ENCODE measurements at regions of chr5 and their contacts with region 1.

Region 1: GRCh38 chr5:149434162-149435014 is 55.3 kb upstream of the IL17B start:
- DNase-seq: no peak
- H3K4me3 ChIP-seq: no peak overlapping the region
- CTCF ChIP-seq: peak; percentile 86

Region 2: GRCh38 chr5:148559461-148559860 is 874.9 kb before region 1 on chr5:
- CTCF ChIA-PET with region 1: no interaction called
- POLR2A ChIA-PET with region 1: no interaction called
- DNase-seq: no peak
- H3K4me3 ChIP-seq: no peak overlapping the region
- CTCF ChIP-seq: no peak

Region 3: DNA sequence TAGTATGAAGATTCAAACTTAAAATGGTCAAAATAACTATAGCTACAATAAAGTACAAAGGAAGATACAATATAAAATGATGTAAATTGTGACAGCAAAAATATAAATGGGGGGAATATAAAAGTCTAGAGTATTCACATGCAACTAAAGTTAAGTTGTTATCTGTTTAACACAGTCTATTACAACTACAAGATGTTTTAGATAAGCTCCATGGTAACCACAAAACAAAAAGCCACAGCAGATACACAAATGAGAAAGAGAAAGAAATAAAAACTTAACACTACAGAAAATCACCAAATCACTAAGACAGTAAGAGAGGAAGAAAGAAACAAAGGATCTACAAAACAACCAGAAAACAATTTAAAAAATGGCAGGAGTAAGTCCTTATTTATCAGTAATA is 354.5 kb before region 1 on chr5:
- CTCF ChIA-PET with region 1: no interaction called
- POLR2A ChIA-PET with region 1: no interaction called
- DNase-seq: no peak
- H3K4me3 ChIP-seq: no peak overlapping the region
- CTCF ChIP-seq: no peak

Region 4: GRCh38 chr5:149387081-149387631 is 47.2 kb before region 1 on chr5:
- CTCF ChIA-PET with region 1: interaction called, 737 read pairs
- POLR2A ChIA-PET with region 1: interaction called, 19 read pairs
- DNase-seq: no peak
- H3K4me3 ChIP-seq: no peak overlapping the region
- CTCF ChIP-seq: no peak

Region 5: DNA sequence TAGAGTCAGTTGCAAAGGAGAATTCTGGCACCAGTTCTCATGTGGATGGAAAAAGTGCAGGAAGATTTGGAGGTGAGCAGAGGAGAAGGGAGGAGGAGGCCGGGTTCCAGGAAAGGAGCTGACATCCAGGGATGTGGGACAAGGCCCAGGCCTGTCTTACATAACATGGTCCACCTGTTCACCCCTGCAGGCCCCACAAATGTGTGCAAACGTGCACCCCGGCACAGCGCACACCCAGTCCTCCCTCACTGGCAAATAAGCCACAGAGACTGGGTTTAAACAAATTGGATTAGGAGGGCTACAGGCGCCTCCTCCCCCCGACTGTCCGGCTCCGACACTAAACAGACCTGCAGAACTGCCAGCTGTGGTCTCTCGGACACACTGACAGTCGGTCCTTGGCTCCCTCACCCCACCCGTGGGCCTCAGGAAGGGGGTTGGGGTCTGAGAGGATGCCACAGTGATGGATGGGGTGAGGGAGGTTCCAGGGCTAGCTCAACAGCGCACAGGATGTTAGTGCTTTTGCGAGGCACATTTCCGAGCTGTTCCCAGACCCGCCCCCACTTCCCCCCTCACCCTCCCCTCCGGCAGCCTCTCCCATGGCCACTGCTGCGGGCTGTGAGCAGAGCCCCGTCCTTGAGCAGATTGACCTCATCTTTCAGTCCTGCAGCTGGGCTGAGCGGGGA is 11.9 kb before region 1 on chr5:
- CTCF ChIA-PET with region 1: interaction called, 26 read pairs
- POLR2A ChIA-PET with region 1: interaction called, 24 read pairs
- DNase-seq: no peak
- H3K4me3 ChIP-seq: no peak overlapping the region
- CTCF ChIP-seq: no peak

Region 6: DNA sequence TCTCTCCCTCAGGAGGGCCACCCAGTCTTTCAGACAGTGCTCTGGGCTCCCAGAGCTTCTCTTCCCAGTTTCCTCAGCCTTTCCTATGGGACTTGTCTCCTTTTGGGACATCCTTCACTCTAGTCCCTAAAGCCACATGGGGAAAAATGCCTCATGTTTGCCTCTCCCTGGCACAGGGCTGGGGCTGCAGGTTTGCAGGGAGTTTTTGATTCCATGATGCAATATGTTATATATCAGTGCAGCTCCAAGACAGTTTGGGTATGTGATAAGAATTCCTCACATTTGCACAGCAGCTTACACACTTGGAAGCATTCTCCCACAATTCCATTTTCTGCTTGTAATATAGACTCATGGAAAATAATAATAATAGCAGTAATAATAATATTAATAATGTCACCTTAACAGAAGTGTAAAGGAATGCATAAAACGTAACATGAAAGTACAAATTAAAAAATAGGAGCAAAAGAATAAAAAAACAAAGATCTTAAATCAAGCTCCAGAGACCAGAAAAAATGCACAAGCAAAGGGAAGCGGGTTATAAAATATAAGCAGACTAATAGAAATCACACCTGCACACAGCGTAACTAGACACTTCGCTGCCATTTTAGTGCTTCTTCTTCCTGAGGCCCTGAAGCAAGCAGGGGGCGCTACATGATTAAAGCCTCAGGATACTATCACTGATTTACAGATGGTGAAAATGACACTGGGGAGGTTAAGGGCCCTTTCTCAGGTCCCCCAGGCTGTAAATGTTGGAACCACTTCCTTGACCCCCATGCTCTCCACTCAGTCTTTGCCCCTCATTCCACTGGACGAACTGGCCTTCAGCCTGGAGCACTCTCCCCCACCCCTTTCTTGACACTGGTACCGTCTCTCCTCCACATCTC is 14.7 kb after region 1 on chr5:
- CTCF ChIA-PET with region 1: interaction called, 52 read pairs
- POLR2A ChIA-PET with region 1: interaction called, 3 read pairs
- DNase-seq: no peak
- H3K4me3 ChIP-seq: no peak overlapping the region
- CTCF ChIP-seq: peak; percentile 44

Region 7: GRCh38 chr5:149474212-149474618 is 39.8 kb after region 1 on chr5:
- CTCF ChIA-PET with region 1: no interaction called
- POLR2A ChIA-PET with region 1: no interaction called
- DNase-seq: no peak
- H3K4me3 ChIP-seq: no peak overlapping the region
- CTCF ChIP-seq: no peak

Measured in AG04449 (cell line).